ENCODE measurements at regions of chr2 and their contacts with region 1.

Region 1: DNA sequence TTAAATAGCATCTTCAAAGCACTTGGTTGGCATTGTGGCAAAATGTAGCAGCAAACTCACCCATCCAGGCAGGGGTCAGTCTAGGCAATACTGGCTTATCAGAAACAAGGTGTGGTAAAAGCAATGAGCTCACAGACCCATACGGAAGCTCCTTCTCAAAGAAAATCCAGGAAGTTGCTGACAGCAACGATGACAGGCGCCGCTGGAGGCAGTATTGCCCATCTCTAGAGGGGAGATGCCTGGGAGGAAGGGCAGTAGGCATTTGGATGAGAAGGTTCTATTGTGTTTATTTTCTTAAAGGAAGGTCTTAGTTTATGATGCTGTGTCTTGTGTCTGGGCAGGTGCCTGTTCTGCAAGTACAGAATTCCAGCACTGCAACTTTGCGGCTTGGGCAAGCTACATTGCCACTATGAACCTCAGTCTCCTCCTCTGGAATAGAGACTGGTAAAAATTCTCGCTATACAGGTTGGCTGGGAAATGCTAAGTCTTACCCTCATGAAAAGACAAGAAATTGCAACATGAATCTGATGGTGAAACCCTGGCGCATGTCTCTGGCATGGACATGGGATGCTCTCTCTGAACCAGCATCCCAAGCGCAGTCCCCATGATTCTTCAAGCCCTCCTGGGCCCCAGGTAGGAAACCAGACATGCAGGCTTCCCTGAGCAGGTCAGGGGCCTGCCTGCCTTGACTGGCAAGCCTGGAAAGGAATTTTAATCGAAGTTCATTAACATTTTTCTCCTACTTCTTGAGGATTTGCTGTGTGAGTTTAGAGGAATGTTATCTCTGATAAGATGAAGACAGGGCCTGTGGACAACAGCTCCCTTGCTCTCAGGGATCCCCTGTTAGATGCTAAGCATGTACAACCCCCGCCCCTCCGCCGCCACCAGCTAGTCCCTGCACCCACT is 156.0 kb downstream of the TFCP2L1 start:
- DNase-seq: peak; percentile 45
- ATAC-seq: peak; percentile 76
- H3K4me3 ChIP-seq: no peak overlapping the region
- H3K27ac ChIP-seq: no peak overlapping the region
- H3K4me1 ChIP-seq: no peaks in the 10 kb centered on the region
- H3K27me3 ChIP-seq: peaks cover 6 to 42% of the 10 kb centered on the region in 2 experiments; a peak in 3 of 5 replicates
- CTCF ChIP-seq: peak; percentile 62
- EP300 ChIP-seq: no peak
- POLR2A ChIP-seq: no peak
- RAD21 ChIP-seq: no peak; the same call in 1 of the 2 replicates

Region 2: DNA sequence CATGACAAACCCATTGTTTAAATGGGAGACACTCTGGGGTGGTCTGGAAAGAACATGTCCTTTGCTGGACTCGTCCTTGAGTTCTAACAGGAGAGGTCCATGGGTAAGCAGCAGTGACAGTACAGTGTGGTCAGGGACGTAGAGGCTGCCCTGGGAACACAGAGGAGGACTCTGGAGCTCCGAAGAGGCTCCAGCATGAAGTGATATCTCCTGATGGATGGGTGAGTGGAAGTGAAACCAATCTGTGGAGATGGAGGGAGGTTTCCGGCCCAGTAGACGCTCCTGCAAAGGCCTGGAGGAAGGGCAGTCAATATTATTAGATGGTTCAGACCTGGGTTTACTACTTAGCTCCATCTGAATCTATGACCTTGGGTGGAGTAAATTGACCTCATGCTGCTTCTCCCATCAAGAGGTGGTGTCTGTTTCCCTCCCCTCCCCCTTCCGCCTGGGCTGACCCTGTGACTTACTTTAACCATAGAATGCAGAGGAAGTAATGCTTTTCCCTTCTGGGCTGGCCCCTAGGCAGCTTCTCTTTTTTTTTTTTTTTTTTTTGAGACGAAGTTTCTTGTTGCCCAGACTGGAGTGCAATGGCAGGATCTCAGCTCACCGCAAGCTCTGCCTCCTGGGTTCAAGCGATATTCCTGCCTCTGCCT is 158.3 kb after region 1 on chr2:
- CTCF ChIA-PET with region 1: no interaction called
- POLR2A ChIA-PET with region 1: no interaction called
- in situ Hi-C with region 1: no loop called
- intact Hi-C with region 1: no loop called
- DNase-seq: no peak
- ATAC-seq: no peak; the same call in 2 of the 3 replicates
- H3K4me3 ChIP-seq: no peak overlapping the region
- H3K27ac ChIP-seq: no peak overlapping the region
- H3K4me1 ChIP-seq: peaks cover 21% of the 10 kb centered on the region
- H3K27me3 ChIP-seq: peaks cover 20 to 82% of the 10 kb centered on the region in 2 experiments
- CTCF ChIP-seq: no peak
- EP300 ChIP-seq: no peak
- POLR2A ChIP-seq: no peak
- RAD21 ChIP-seq: no peak

Region 3: GRCh38 chr2:121319953-121320352 is 190.9 kb after region 1 on chr2:
- CTCF ChIA-PET with region 1: no interaction called
- POLR2A ChIA-PET with region 1: no interaction called
- in situ Hi-C with region 1: loop called (anchors 10 kb)
- intact Hi-C with region 1: loop called (anchors 5 kb)
- DNase-seq: no peak
- ATAC-seq: no peak
- H3K4me3 ChIP-seq: no peak overlapping the region
- H3K27ac ChIP-seq: no peak overlapping the region
- H3K4me1 ChIP-seq: peaks cover 12% of the 10 kb centered on the region; the same call in 1 of the 2 replicates
- H3K27me3 ChIP-seq: peaks cover 0 to 2% of the 10 kb centered on the region in 2 experiments; a peak in 1 of 5 replicates
- CTCF ChIP-seq: no peak
- EP300 ChIP-seq: no peak
- POLR2A ChIP-seq: no peak
- RAD21 ChIP-seq: no peak

Region 4: GRCh38 chr2:121329786-121330185 is 200.8 kb after region 1 on chr2:
- CTCF ChIA-PET with region 1: no interaction called
- POLR2A ChIA-PET with region 1: no interaction called
- in situ Hi-C with region 1: loop called (anchors 10 kb)
- intact Hi-C with region 1: loop called (anchors 5 kb)
- DNase-seq: no peak
- ATAC-seq: no peak
- H3K4me3 ChIP-seq: no peak overlapping the region
- H3K27ac ChIP-seq: no peak overlapping the region
- H3K4me1 ChIP-seq: peaks cover 16% of the 10 kb centered on the region
- H3K27me3 ChIP-seq: peaks cover 0 to 7% of the 10 kb centered on the region in 2 experiments; a peak in 1 of 5 replicates
- CTCF ChIP-seq: no peak
- EP300 ChIP-seq: no peak
- POLR2A ChIP-seq: no peak
- RAD21 ChIP-seq: no peak

Region 5: GRCh38 chr2:121356058-121356640 is 227.1 kb after region 1 on chr2:
- CTCF ChIA-PET with region 1: interaction called, 8 read pairs
- POLR2A ChIA-PET with region 1: no interaction called
- in situ Hi-C with region 1: no loop called
- intact Hi-C with region 1: loop called (anchors 2 kb)
- DNase-seq: peak; percentile 55
- ATAC-seq: peak; percentile 78
- H3K4me3 ChIP-seq: no peak overlapping the region
- H3K27ac ChIP-seq: peak overlapping the region; percentile 2
- H3K4me1 ChIP-seq: peaks cover 12% of the 10 kb centered on the region
- H3K27me3 ChIP-seq: no peaks in the 10 kb centered on the region
- CTCF ChIP-seq: peak; percentile 81
- EP300 ChIP-seq: no peak
- POLR2A ChIP-seq: no peak
- RAD21 ChIP-seq: peak; percentile 39; the same call in 1 of the 2 replicates